GM13976 (cell line): ENCODE measurements at regions of chr9 and their contacts with region 1.

Region 1: DNA sequence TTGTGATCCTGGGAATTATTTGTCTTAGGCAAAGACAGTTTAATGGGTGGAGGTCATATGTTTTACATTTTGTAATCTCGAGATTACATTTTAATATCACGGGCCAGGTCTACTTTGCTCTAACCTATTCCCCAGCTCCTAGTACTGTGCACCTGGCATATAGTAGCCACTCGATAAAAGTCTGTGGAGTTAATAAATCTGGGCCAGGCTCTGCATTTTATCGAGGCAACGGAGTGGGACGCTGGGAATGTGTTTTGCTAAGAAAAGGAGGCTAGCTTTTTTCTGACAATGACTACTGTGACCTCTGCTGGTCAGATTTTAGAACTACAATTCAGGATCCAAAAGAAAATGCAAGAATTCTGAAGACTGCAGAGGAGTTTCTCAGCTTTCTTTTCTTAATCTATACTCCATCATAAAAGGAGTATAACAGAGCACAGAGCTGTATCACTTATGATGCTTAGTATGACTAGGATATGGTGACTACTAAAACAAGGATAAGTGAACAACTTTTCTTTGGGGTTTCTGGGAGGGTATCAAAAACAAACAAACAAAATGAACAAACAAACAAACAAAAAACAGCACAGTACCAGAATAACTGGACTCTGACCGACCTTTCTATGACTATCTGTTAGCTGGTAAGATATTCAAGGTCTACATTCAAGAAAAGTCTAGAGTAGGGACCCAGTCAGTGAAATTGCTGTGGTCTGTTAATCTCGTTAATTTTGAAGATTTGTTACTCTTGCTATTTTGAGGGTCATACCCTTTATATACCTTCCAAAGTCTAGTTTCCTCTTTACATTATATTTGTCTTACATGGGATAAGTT is 46.1 kb upstream of the CER1 start:
- DNase-seq: peak; percentile 22
- CTCF ChIP-seq: peak; percentile 56

Region 2: GRCh38 chr9:14466429-14466818 is 302.2 kb before region 1 on chr9:
- in situ Hi-C with region 1: loop called (anchors 5 kb)
- DNase-seq: no peak
- CTCF ChIP-seq: no peak

Region 3: DNA sequence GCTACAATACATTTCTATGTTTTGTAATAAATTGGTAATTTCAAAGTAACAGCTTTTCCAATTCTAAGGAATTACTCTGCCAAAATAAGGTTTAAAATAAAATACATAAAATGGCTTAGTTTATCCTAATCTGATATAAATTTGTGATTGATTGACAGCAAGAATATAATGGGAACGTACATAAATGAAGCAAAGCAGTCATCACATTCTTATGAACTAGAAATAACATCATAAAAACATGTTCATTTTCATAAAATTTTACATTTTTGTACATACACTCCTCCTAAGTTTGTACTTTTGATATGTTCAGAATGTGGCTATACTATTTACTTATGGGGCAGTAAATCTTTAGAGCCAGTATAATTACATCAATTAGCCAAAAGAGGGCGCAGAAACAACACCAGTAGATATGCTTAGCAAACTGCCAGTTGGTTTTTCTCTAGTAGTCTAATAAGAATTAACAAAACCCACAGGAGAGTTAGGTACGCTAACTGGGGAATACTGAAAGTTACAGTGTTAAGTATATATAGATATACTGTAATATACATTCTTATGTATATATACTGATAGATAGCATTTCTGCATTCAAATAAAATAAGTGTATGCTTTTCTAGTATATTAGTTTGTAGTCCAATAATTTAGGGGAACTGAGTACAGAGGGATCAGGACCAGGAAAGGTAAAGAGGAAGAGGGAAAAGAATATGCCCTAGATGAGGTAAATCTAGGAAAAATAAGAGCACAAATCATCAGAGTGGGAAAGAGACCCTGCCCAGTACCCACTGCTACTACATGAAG is 152.2 kb before region 1 on chr9:
- in situ Hi-C with region 1: loop called (anchors 10 kb)
- DNase-seq: no peak
- CTCF ChIP-seq: peak; percentile 51

Region 4: GRCh38 chr9:14813336-14814180 is 44.9 kb after region 1 on chr9:
- in situ Hi-C with region 1: no loop called
- DNase-seq: no peak
- CTCF ChIP-seq: no peak